Activated naive CD4-positive, alpha-beta T cell treated with anti-CD3 and anti-CD28 coated beads, Interleukin-2, amount 10 ng/mL, durations not matched to agents 7 days and 5 days (primary cell): ENCODE measurements at regions of chr1 and their contacts with region 1.

Region 1: GRCh38 chr1:110460253-110461220 is 9.6 kb downstream of the PROK1 start:
- DNase-seq: peak; percentile 89
- H3K4me3 Mint-ChIP-seq: no peak overlapping the region
- H3K27ac Mint-ChIP-seq: no peak overlapping the region
- H3K4me1 Mint-ChIP-seq: no peaks in the 10 kb centered on the region
- H3K27me3 Mint-ChIP-seq: peaks cover 11% of the 10 kb centered on the region

Region 2: DNA sequence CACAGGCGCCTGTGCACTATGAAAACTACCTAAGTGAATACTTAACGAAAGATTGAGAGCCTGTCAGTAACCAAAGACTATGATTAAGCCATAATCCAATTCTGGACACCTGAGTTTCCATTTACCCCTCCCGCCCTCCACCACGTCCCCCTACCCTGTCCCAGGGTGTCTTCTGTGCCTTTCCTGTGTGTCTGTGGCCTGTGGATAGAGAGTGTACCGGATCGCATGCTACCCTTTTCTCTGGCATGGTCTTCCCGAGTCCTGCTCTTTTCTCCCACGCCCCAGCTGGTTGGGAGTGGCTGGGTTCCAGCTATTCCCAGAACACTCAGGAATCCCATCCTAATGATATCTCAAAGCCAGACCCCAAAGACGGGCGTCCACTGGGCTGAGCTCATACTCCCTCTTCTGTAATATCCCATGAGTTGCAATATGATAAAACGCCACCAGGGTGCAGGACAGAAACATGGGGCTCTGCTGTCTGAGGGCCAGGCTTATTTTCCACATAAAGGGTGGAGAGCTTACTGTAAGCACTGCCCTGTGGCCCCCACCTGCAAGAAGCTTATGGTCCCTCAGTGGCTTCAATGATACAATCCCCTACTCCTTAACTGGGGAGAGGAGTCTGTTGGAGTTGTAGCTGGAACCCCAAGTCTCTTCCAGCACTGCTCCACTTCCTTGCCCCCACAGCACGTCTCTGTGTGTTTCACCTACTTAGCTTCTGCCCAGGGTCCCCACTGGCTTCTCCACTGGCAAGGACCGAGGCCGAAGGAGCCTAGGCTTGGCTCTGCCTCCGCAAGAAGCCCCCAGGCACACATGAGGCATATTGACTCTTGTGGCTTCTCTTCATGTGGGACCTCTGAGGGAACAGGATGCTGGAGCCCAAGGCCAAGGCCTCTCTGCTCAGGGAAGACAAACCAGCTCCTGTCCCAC is 372.5 kb before region 1 on chr1:
- CTCF ChIA-PET with region 1: interaction called, 10 read pairs
- DNase-seq: peak; percentile 66
- H3K4me3 Mint-ChIP-seq: no peak overlapping the region
- H3K27ac Mint-ChIP-seq: no peak overlapping the region
- H3K4me1 Mint-ChIP-seq: peaks cover 16% of the 10 kb centered on the region
- H3K27me3 Mint-ChIP-seq: peaks cover 78% of the 10 kb centered on the region

Region 3: DNA sequence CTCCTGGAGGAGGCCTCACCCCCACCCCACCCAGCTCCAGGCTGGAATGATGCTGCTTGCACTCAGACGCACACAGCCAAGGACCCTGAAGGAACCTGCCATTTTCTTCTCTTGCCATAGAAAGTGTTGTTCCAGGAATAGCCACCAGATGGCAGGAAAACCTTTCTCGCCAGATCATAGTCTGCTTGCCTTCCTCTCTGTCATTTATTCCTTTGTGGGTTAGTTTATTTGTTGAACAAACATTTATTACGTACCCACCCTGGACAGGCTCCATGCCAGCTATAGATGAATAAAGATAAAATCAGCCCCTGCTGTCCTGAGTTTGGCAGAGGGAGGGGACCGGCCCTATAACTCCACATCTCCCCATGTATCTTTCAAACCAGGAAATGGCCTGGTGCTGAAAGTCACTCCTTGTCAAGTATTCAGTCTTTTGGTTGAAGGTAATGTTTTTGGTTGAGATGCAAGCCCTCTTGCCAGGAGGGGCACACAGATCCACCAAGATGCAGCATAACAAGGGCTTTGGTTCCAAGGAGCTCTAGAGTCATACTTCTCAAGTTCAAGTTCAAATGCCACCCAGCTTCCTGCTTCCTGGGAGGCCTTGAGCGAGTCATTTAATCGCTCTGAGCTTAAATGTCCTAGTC is 257.4 kb before region 1 on chr1:
- CTCF ChIA-PET with region 1: interaction called, 96 read pairs
- DNase-seq: peak; percentile 81
- H3K4me3 Mint-ChIP-seq: no peak overlapping the region
- H3K27ac Mint-ChIP-seq: peak overlapping the region; percentile 82
- H3K4me1 Mint-ChIP-seq: peaks cover 27% of the 10 kb centered on the region
- H3K27me3 Mint-ChIP-seq: no peaks in the 10 kb centered on the region

Region 4: GRCh38 chr1:110338886-110339406 is 121.6 kb before region 1 on chr1 and contains the start of gene RBM15:
- CTCF ChIA-PET with region 1: interaction called, 10 read pairs
- DNase-seq: peak; percentile 98
- H3K4me3 Mint-ChIP-seq: no peak within 1 kb of the TSS
- H3K27ac Mint-ChIP-seq: no peak within 1 kb of the TSS
- H3K4me1 Mint-ChIP-seq: peaks cover 60% of the 10 kb centered on the region
- H3K27me3 Mint-ChIP-seq: no peaks in the 10 kb centered on the region

Region 5: GRCh38 chr1:110412576-110412975 is 48.0 kb before region 1 on chr1:
- CTCF ChIA-PET with region 1: interaction called, 88 read pairs
- DNase-seq: peak; percentile 75
- H3K4me3 Mint-ChIP-seq: no peak overlapping the region
- H3K27ac Mint-ChIP-seq: no peak overlapping the region
- H3K4me1 Mint-ChIP-seq: peaks cover 17% of the 10 kb centered on the region
- H3K27me3 Mint-ChIP-seq: no peaks in the 10 kb centered on the region

Region 6: GRCh38 chr1:110619412-110620249 is 159.1 kb after region 1 on chr1:
- CTCF ChIA-PET with region 1: no interaction called
- DNase-seq: peak; percentile 93
- H3K4me3 Mint-ChIP-seq: peak overlapping the region; percentile 82
- H3K27ac Mint-ChIP-seq: peak overlapping the region; percentile 98
- H3K4me1 Mint-ChIP-seq: peaks cover 54% of the 10 kb centered on the region
- H3K27me3 Mint-ChIP-seq: peaks cover 8% of the 10 kb centered on the region